AG04450 (cell line): ENCODE measurements at regions of chr3 and their contacts with region 1.

Region 1: GRCh38 chr3:40317061-40317855 is 7.8 kb downstream of the EIF1B start:
- DNase-seq: peak; percentile 37
- H3K4me3 ChIP-seq: no peak overlapping the region
- H3K27ac ChIP-seq: no peak overlapping the region
- H3K27me3 ChIP-seq: peaks cover 5% of the 10 kb centered on the region
- CTCF ChIP-seq: peak; percentile 89

Region 2: DNA sequence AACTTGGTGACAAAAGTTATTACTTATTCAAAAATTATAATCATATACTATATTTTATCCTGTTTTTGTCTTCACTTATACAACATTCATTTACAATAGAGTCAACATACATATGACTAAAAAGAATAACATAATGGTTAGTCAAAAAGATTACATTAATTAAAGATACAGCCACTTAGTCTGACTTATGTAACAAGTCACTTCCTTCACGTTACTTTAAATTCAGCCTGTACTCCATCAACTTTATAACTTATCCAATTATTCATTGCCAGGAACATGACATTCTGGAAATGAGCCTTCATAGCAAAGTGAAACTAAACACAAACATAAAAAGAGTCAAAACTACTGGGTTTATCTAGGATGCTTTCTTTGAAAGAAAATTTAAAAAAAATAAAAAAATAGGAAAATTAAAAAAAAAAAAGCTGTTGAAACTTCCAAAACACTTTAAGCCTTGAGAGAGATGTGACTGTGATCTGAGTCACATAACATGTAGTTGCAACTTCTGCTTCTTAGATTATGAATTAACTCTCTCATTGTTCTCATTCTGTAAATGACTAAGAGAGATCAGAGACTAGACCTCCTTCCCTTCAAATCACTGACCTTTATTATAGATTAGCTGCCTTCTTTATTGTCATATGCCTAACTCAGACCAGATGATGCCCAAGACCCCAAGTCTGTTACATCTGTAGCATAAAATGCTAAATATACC is 400.0 kb before region 1 on chr3:
- CTCF ChIA-PET with region 1: no interaction called
- POLR2A ChIA-PET with region 1: no interaction called
- DNase-seq: no peak
- H3K4me3 ChIP-seq: no peak overlapping the region
- H3K27ac ChIP-seq: no peak overlapping the region
- H3K27me3 ChIP-seq: no peaks in the 10 kb centered on the region
- CTCF ChIP-seq: no peak

Region 3: GRCh38 chr3:40179016-40179415 is 138.2 kb before region 1 on chr3:
- CTCF ChIA-PET with region 1: interaction called, 12 read pairs
- POLR2A ChIA-PET with region 1: no interaction called
- DNase-seq: peak; percentile 27
- H3K4me3 ChIP-seq: no peak overlapping the region
- H3K27ac ChIP-seq: no peak overlapping the region
- H3K27me3 ChIP-seq: no peaks in the 10 kb centered on the region
- CTCF ChIP-seq: peak; percentile 77

Region 4: DNA sequence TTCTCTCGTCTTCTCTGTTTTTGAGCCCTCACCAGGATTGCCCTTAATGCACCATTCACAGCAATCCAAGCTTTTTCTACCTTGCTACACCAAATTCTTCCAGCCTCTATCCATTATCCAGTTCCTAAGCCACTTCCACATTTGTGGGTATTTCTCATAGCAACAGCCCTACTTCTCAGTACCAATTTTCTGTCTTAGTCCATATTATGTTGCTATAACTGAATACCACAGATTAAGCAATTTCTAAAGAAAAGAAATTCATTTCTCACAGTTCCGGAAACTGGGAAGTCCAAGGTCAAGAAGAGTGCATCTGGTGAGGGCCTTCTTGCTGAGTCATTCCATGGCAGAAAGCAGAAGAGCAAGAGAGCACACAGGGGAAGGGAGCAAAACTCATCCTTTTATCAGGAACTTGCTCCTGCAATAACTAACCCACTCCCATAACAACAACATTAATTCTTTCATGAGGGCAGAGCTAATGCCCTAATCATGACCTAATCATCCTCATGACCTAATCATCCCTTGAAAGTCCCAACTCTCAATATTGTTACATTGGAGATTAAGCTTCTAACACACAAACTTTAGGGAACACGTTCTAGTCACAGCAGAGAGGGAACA is 17.4 kb before region 1 on chr3:
- CTCF ChIA-PET with region 1: interaction called, 10 read pairs
- POLR2A ChIA-PET with region 1: no interaction called
- DNase-seq: peak; percentile 45
- H3K4me3 ChIP-seq: no peak overlapping the region
- H3K27ac ChIP-seq: no peak overlapping the region
- H3K27me3 ChIP-seq: no peaks in the 10 kb centered on the region
- CTCF ChIP-seq: no peak

Region 5: GRCh38 chr3:40329071-40329470 is 11.8 kb after region 1 on chr3:
- CTCF ChIA-PET with region 1: interaction called, 19 read pairs
- POLR2A ChIA-PET with region 1: no interaction called
- DNase-seq: no peak
- H3K4me3 ChIP-seq: no peak overlapping the region
- H3K27ac ChIP-seq: no peak overlapping the region
- H3K27me3 ChIP-seq: peaks cover 5% of the 10 kb centered on the region
- CTCF ChIP-seq: no peak

Region 6: DNA sequence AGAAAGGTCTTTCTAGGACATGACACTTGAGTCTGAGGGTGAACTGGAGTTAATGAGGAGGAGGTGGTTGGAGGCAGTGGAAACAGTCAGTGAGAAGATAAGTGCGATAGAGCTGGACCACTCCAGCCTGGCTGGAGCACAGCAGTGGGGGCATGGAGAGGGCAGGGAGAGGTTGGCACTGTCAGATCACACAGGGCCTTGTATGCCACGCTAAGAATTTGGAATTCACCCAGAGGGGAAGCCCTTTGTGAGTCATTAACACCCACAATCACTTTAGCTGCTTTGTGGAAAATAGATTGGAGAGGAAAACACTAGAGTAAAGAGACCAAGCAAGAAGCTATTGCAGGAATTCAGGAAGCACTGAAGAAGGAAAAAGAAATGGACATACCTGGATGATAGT is 290.8 kb after region 1 on chr3:
- CTCF ChIA-PET with region 1: no interaction called
- POLR2A ChIA-PET with region 1: no interaction called
- DNase-seq: no peak
- H3K4me3 ChIP-seq: no peak overlapping the region
- H3K27ac ChIP-seq: no peak overlapping the region
- H3K27me3 ChIP-seq: peaks cover 2% of the 10 kb centered on the region
- CTCF ChIP-seq: no peak

Region 7: GRCh38 chr3:40701016-40701588 is 383.8 kb after region 1 on chr3:
- CTCF ChIA-PET with region 1: no interaction called
- POLR2A ChIA-PET with region 1: no interaction called
- DNase-seq: no peak
- H3K4me3 ChIP-seq: no peak overlapping the region
- H3K27ac ChIP-seq: no peak overlapping the region
- H3K27me3 ChIP-seq: no peaks in the 10 kb centered on the region
- CTCF ChIP-seq: no peak